ENCODE measurements at regions of chr21 and their contacts with region 1.

Region 1: GRCh38 chr21:33127154-33127893 is 57.4 kb downstream of the OLIG1 start:
- DNase-seq: peak; percentile 77
- H3K4me3 Mint-ChIP-seq: peak overlapping the region; percentile 38
- H3K27ac Mint-ChIP-seq: no peak overlapping the region
- H3K4me1 Mint-ChIP-seq: peaks cover 3% of the 10 kb centered on the region
- H3K27me3 Mint-ChIP-seq: peaks cover 14% of the 10 kb centered on the region

Region 2: GRCh38 chr21:32834916-32835235 is 292.4 kb before region 1 on chr21:
- CTCF ChIA-PET with region 1: interaction called, 9 read pairs
- POLR2A ChIA-PET with region 1: no interaction called
- intact Hi-C with region 1: loop called (anchors 5 kb)
- DNase-seq: no peak
- H3K4me3 Mint-ChIP-seq: no peak overlapping the region
- H3K27ac Mint-ChIP-seq: no peak overlapping the region
- H3K4me1 Mint-ChIP-seq: no peaks in the 10 kb centered on the region
- H3K27me3 Mint-ChIP-seq: peaks cover 3% of the 10 kb centered on the region

Region 3: DNA sequence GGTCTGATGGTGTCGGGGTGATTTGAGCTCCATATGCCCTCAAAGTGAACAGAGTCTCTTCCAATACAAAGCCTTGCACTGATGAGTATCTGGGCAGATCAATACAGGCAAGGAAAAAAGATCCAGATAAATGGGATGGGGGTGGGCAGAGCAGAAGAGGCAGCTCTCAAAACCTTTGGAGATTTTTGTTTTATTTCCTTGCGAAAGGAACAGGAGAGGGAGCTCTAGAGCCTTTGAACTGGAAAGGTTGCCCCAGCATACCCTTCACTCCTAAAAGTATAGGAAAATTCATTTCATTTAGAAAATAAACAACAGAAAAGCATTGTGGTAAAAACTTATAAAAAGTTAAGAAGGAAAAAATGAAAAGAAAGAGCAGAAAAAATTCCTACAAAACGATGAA is 133.0 kb before region 1 on chr21:
- CTCF ChIA-PET with region 1: interaction called, 15 read pairs
- POLR2A ChIA-PET with region 1: no interaction called
- intact Hi-C with region 1: loop called (anchors 1 kb)
- DNase-seq: no peak
- H3K4me3 Mint-ChIP-seq: no peak overlapping the region
- H3K27ac Mint-ChIP-seq: no peak overlapping the region
- H3K4me1 Mint-ChIP-seq: no peaks in the 10 kb centered on the region
- H3K27me3 Mint-ChIP-seq: peaks cover 16% of the 10 kb centered on the region

Region 4: DNA sequence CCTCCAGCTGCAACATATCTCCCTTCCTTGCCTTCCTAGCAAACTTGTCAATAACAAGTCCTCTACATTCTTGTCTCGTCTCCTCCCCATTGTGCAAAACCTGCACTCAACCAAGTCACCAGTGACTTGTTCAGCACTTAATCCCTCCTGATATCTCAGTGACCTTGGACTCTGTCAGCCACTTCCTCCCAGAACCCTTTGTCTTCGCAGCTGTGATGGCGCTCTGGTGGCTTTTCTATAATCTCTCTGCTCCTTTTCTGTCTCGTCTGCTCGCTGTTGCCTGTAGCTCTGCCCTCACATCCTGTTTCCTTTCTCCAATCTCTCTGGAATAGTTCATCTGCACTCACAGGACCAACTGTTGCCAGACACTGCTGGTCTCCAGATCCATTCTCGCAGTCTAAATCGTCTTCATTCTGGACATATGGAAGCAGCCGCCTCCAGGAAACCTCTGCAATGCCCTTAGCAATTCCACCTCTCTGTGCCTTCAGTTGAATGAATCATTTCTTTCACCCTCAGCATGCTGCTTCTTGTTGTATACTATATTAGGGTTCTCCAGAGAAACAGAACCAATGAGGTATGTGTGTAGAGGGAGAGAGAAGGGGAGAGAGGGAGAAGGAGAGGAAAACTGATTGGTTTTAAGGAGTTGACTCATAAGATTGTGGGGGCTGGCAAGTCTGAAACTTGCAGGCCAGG is 85.0 kb after region 1 on chr21:
- CTCF ChIA-PET with region 1: no interaction called
- POLR2A ChIA-PET with region 1: no interaction called
- intact Hi-C with region 1: no loop called
- DNase-seq: no peak
- H3K4me3 Mint-ChIP-seq: peak overlapping the region; percentile 49
- H3K27ac Mint-ChIP-seq: peak overlapping the region; percentile 25
- H3K4me1 Mint-ChIP-seq: peaks cover 65% of the 10 kb centered on the region
- H3K27me3 Mint-ChIP-seq: no peaks in the 10 kb centered on the region

Measured in activated CD4-positive, alpha-beta memory T cell treated with anti-CD3 and anti-CD28 coated beads for 36 hours (primary cell).